GM10248 (cell line): ENCODE measurements at regions of chr6 and their contacts with region 1.

Region 1: GRCh38 chr6:116542426-116542825 is 3.1 kb downstream of the TRAPPC3L start:
- DNase-seq: no peak
- CTCF ChIP-seq: no peak

Region 2: DNA sequence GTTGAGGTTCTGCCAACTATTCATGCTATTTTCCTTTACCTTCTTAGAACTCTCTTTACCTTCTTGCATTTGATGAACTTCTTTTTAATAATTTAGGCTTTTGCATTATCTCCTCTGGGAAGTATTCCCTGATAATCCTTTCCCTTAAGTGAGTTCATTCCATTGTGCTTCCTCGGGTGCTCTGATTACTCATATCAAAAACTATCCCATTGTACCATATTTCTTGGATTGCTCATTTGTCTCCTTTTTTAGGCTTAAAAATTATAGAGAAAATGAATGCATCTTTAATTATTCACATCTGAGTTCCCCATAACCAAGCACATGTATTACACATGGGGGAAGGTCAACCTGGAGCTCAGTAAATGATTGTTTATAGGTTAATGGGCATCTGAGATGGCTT is 13.6 kb after region 1 on chr6:
- CTCF ChIA-PET with region 1: interaction called, 40 read pairs
- POLR2A ChIA-PET with region 1: no interaction called
- DNase-seq: no peak
- CTCF ChIP-seq: no peak

Region 3: DNA sequence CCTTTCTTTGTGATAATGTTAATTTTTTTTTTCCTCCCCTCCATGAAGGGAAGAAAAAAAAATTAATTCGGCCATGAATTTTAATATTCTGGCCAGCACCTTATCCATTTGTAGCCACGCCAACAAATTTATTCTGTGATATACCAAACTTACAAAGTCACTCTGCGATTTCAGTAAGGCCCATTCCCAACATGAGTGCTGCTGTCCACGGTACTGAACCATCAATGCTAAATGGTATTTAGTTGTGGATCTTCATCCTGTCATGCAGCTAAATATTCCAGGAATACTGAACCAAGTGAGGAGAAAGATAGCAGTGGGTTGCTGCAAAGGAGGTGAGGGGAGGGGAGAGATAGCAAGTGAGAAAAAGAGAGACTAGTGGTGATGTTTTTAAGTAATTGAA is 54.4 kb after region 1 on chr6:
- CTCF ChIA-PET with region 1: no interaction called
- POLR2A ChIA-PET with region 1: no interaction called
- DNase-seq: no peak
- CTCF ChIP-seq: no peak